Panc1 (cell line): ENCODE measurements at regions of chr1 and their contacts with region 1.

Region 1: GRCh38 chr1:161192476-161193465 is 6.1 kb downstream of the ADAMTS4 start:
- DNase-seq: no peak
- ATAC-seq: peak; percentile 86
- H3K4me3 ChIP-seq: no peak overlapping the region
- H3K27ac ChIP-seq: no peak overlapping the region
- H3K4me1 ChIP-seq: no peaks in the 10 kb centered on the region
- H3K27me3 ChIP-seq: no peaks in the 10 kb centered on the region
- CTCF ChIP-seq: peak; percentile 96

Region 2: GRCh38 chr1:161374373-161374772 is 181.6 kb after region 1 on chr1:
- CTCF ChIA-PET with region 1: interaction called, 8 read pairs
- POLR2A ChIA-PET with region 1: interaction called, 10 read pairs
- in situ Hi-C with region 1: no loop called
- intact Hi-C with region 1: loop called (anchors 5 kb)
- DNase-seq: no peak
- ATAC-seq: peak; percentile 82
- H3K4me3 ChIP-seq: no peak overlapping the region
- H3K27ac ChIP-seq: no peak overlapping the region
- H3K4me1 ChIP-seq: no peaks in the 10 kb centered on the region
- H3K27me3 ChIP-seq: no peaks in the 10 kb centered on the region
- CTCF ChIP-seq: peak; percentile 70; the same call in 1 of the 2 replicates

Region 3: DNA sequence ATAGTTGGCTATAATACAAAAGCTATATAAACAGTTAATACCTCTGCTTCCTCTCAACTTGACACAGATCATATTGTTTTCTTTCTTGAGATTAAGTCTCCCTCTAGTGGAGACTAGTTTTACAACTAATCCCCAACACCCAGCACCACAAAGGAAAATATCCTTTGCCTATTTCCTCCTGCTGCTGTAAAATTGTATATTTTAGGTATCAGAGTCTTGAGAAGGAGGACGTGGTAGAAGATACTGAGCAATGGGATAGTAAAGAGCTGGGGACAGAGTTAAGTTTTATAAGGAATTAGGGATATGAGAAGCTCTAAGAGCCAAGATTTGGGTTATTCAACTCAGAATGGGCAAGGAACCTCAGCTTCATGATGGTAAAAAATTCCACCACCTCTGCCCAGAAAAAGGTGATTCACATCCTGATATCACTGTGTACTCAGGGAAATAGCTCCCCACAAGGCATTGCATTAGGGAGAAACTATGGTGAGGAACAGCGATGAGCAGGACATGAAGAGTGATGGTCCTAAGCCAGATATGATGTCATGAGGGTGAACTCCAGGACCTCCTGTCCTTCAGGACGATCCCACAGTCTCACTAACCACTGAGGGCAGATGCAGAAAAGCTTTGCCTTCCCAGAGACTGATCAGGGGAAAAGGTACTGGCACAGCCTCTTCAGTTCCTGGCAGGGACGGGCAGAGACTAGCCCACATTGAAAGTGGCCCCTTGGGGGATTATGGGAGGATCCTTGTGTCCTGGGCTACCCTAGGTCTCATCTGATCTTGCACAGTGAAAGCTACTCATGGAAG is 189.6 kb after region 1 on chr1:
- CTCF ChIA-PET with region 1: interaction called, 3 read pairs
- POLR2A ChIA-PET with region 1: interaction called, 10 read pairs
- in situ Hi-C with region 1: no loop called
- intact Hi-C with region 1: no loop called
- DNase-seq: peak; percentile 68
- ATAC-seq: peak; percentile 92
- H3K4me3 ChIP-seq: peak overlapping the region in 1 of 2 experiments; percentile 21; a peak in 2 of 4 replicates
- H3K27ac ChIP-seq: peak overlapping the region; percentile 79
- H3K4me1 ChIP-seq: peaks cover 20% of the 10 kb centered on the region
- H3K27me3 ChIP-seq: no peaks in the 10 kb centered on the region
- CTCF ChIP-seq: peak; percentile 71; the same call in 1 of the 2 replicates